Transverse colon (tissue), 4 donors: ENCODE measurements at regions of chr6 and their contacts with region 1.

Region 1: DNA sequence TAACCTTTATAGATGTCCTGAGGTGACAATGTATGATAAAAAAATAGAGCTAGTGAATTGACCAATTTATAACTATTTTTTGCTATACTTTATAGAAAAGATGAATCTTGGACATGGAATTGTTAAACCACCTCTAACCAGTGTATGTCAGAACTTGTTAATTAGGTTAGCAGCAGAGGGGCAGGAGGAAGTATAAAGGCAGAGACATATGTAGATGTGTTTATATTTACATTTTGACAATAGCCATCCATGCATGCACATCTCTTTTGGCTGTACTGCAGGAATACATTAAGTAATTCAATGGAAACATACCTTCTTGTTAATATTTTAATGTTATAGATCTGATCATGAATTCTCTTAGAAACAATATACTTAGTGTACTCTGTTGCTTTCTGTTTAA is 254.6 kb upstream of the NT5E start:
- DNase-seq: no peak
- H3K4me3 ChIP-seq: no peak overlapping the region
- H3K27ac ChIP-seq: no peak overlapping the region
- H3K4me1 ChIP-seq: no peaks in the 10 kb centered on the region
- H3K27me3 ChIP-seq: no peaks in the 10 kb centered on the region
- CTCF ChIP-seq: no peak
- EP300 ChIP-seq: no peak
- POLR2A ChIP-seq: no peak

Region 2: GRCh38 chr6:83741089-83741488 is 1454.2 kb before region 1 on chr6:
- in situ Hi-C with region 1: no loop called
- intact Hi-C with region 1: loop called (anchors 5 kb)
- DNase-seq: no peak
- H3K4me3 ChIP-seq: no peak overlapping the region
- H3K27ac ChIP-seq: no peak overlapping the region
- H3K4me1 ChIP-seq: no peaks in the 10 kb centered on the region
- H3K27me3 ChIP-seq: no peaks in the 10 kb centered on the region
- CTCF ChIP-seq: no peak
- EP300 ChIP-seq: no peak
- POLR2A ChIP-seq: no peak